Common myeloid progenitor, CD34-positive (primary cell): ENCODE measurements at regions of chr10 and their contacts with region 1.

Region 1: DNA sequence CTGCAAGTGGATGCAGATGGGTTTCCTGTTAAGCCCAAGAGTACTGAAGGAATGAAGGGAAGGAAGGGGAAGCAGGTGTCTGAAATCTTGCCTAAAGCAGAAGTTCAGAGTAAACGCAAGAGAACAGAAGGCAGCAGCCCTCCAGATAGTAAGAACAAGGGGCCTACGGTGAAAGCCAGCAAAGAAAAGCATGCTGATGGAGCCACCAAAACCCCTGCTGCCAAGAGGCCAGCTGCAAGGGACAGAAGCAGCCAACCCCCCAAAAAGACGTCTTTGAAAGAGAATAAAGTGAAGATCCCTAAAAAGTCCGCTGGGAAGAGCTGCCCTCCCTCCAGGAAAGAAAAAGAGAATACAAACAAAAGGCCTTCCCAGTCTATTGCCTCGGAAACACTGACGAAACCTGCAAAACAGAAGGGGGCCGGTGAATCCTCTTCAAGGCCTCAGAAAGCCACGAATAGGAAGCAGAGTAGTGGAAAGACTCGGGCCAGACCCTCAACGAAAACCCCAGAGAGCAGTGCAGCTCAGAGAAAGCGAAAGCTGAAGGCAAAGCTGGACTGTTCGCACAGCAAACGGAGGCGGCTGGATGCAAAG is 152.5 kb downstream of the LCOR start:
- DNase-seq: peak; percentile 86 to 100 (median 98)
- H3K4me3 ChIP-seq: peak overlapping the region in 6 of 7 experiments; percentile 39 to 73 (median 54)
- H3K27ac ChIP-seq: peak overlapping the region; percentile 52 to 84
- H3K4me1 ChIP-seq: peaks cover 16 to 49% (median 36%) of the 10 kb centered on the region in 4 experiments
- H3K27me3 ChIP-seq: no peaks in the 10 kb centered on the region

Region 2: DNA sequence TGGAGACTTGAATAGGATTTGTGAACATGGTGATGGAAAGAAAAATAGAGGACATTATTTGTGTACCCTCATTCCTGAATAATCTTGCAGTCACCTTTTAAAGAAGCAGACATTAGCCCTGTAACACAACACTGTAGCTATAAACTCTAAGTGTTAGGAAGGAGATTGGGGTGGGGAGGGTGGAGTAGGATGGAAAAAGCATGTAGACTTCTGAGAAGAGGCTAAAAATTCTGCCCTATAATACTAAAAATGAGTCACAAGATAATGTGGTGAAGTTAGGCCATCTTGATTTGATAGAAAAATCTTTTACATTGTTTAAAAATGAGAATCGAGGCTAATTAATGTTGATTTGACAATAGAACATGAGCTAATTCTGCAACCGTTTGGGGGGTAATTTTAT is 23.8 kb before region 1 on chr10:
- CTCF ChIA-PET with region 1: interaction called, 12 read pairs
- POLR2A ChIA-PET with region 1: interaction called, 3 read pairs
- DNase-seq: no peak
- H3K4me3 ChIP-seq: no peak overlapping the region
- H3K27ac ChIP-seq: no peak overlapping the region
- H3K4me1 ChIP-seq: no peaks in the 10 kb centered on the region
- H3K27me3 ChIP-seq: no peaks in the 10 kb centered on the region

Region 3: GRCh38 chr10:96973809-96974747 is 10.6 kb before region 1 on chr10:
- CTCF ChIA-PET with region 1: interaction called, 21 read pairs
- POLR2A ChIA-PET with region 1: no interaction called
- DNase-seq: no peak
- H3K4me3 ChIP-seq: no peak overlapping the region
- H3K27ac ChIP-seq: no peak overlapping the region
- H3K4me1 ChIP-seq: no peaks in the 10 kb centered on the region
- H3K27me3 ChIP-seq: no peaks in the 10 kb centered on the region

Region 4: DNA sequence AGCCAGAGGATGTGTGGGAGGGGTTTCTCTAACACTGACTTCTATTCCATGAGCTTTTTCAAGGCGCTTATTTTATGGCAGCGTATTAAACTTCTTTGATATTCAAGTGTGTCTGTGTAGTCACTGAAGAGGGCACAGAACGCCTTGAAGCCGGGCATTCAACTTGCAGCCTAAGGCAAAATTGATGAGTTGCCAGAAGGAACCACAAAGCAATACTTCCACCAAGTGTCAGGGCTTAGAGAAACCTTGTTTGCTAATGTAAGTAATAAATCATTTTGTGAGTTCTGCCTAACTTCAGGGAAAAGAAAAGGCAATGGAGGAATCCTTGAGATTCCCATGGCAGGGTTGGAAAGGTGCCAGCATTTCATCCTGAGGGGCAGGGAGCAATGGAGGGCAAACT is 11.2 kb after region 1 on chr10:
- CTCF ChIA-PET with region 1: interaction called, 22 read pairs
- POLR2A ChIA-PET with region 1: no interaction called
- DNase-seq: peak; percentile 15 to 63 (median 55)
- H3K4me3 ChIP-seq: no peak overlapping the region
- H3K27ac ChIP-seq: no peak overlapping the region
- H3K4me1 ChIP-seq: peaks cover 0 to 8% (median 3%) of the 10 kb centered on the region in 4 experiments
- H3K27me3 ChIP-seq: no peaks in the 10 kb centered on the region